A549 (cell line): ENCODE measurements at regions of chr6 and their contacts with region 1.

Region 1: GRCh38 chr6:37059344-37060206 is 54.1 kb downstream of the FGD2 start:
- DNase-seq: peak; percentile 89 to 95
- ATAC-seq: peak; percentile 88 to 91
- H3K4me3 ChIP-seq: peak overlapping the region; percentile 8; the same call in 1 of the 3 replicates
- H3K27ac ChIP-seq: peak overlapping the region; percentile 100
- H3K4me1 ChIP-seq: peaks cover 62% of the 10 kb centered on the region
- CTCF ChIP-seq: peak; percentile 63
- EP300 ChIP-seq: peak in 1 of 2 experiments; percentile 40; a peak in 1 of 5 replicates
- POLR2A ChIP-seq: peak; percentile 11; the same call in 1 of the 2 replicates
- RAD21 ChIP-seq: peak; percentile 71 to 81

Region 2: DNA sequence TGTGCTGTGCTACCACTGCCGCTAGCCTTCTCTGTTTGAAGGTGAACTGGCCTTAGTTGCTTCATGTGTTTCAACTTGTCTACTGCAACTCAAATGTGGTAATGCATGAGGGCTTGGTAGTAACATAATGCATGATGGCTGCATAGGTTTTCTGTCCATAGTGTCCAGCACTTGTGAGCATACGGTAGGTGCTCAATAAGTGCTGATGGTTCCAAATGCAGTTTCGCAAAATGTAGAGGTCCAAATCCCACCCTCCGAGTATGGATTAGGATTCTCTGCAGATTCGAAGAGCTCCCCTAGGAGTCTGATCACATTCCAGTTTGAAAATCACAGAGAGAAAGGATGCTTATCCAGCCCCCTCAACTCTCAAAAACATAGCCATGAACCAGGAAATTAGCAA is 10.1 kb after region 1 on chr6:
- CTCF ChIA-PET with region 1: interaction called, 17 read pairs
- POLR2A ChIA-PET with region 1: no interaction called
- DNase-seq: no peak
- ATAC-seq: no peak
- H3K4me3 ChIP-seq: no peak overlapping the region
- H3K27ac ChIP-seq: no peak overlapping the region
- H3K4me1 ChIP-seq: no peaks in the 10 kb centered on the region
- CTCF ChIP-seq: no peak
- EP300 ChIP-seq: no peak
- POLR2A ChIP-seq: no peak
- RAD21 ChIP-seq: no peak

Region 3: DNA sequence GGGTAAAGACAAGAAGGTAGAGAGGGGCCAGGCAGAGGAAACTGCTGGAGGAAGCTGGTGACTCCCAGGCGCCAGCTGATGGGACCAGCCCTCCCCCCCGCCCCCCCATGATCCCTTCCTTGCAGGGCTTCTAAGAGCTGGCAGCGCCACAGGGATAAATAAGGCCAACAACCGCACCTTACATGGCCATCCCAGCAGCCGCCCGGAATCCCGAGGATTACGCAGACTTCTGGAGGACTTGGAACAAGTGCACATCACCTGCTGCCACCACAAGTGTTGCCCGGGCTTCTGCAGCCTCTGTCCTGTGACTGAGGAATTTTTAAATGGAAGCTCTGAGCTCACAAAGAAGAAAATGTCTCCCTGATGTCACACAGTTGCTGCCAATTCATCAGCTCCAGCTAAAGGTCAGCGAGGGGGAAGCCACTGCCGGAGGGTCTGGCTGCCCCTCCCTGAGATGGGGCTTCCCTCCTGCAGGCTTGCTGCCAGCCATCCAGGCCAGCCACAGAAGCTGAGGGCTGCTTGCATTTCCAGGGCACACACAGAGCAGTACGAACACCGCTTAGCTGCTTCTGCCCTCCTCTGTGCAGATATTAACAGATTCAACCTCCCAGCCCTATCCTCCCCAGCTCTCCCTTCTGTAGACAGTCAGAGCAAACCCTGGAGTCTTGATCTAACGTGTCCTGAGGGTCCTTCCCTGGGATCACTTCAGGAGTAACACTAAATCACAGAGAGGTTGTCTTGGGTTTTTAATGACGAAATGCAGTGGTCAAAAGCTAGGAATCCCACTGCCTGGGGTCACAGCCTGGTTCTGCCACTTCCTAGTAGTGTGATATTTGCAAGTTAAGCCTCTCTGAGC is 71.8 kb after region 1 on chr6:
- CTCF ChIA-PET with region 1: interaction called, 15 read pairs
- POLR2A ChIA-PET with region 1: interaction called, 7 read pairs
- DNase-seq: peak; percentile 37 to 88
- ATAC-seq: peak; percentile 41 to 57
- H3K4me3 ChIP-seq: peak overlapping the region; percentile 23; the same call in 1 of the 3 replicates
- H3K27ac ChIP-seq: peak overlapping the region; percentile 83 to 93
- H3K4me1 ChIP-seq: peaks cover 87% of the 10 kb centered on the region
- CTCF ChIP-seq: no peak
- EP300 ChIP-seq: no peak
- POLR2A ChIP-seq: no peak
- RAD21 ChIP-seq: peak in 1 of 2 experiments; percentile 7; a peak in 1 of 5 replicates

Region 4: GRCh38 chr6:37137201-37138090 is 77.9 kb after region 1 on chr6:
- CTCF ChIA-PET with region 1: interaction called, 15 read pairs
- POLR2A ChIA-PET with region 1: interaction called, 5 read pairs
- DNase-seq: peak; percentile 85 to 94
- ATAC-seq: peak; percentile 68 to 76
- H3K4me3 ChIP-seq: peak overlapping the region; percentile 32
- H3K27ac ChIP-seq: peak overlapping the region; percentile 93 to 96
- H3K4me1 ChIP-seq: peaks cover 82% of the 10 kb centered on the region
- CTCF ChIP-seq: no peak
- EP300 ChIP-seq: peak; percentile 47 to 60; a peak in 2 of 5 replicates
- POLR2A ChIP-seq: no peak
- RAD21 ChIP-seq: no peak; a peak in 2 of 5 replicates